ENCODE measurements at regions of chr18 and their contacts with region 1.

Region 1: DNA sequence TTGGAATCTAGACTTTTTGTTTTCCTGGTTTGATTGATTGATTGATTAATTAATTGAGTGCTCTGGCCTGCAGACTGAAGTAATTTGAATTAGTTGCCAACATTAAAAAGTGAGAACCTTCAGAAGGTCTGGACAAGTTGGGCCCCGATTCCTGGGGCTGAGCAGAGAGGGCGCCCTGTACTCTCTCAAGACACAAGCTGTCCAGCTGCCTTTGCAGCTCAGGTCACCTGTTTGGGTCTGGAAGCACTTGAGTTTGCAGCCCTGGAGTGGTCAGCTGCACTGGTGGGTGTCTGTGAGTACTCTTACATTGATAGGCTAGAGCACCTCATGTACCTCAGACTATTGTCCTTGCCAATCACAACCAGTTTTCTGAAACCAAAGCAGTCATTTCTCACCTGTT is 22.7 kb upstream of the CELF4 start:
- DNase-seq: no peak
- H3K4me3 ChIP-seq: no peak overlapping the region
- H3K4me3 Mint-ChIP-seq: no peak overlapping the region
- H3K27ac ChIP-seq: no peak overlapping the region
- H3K27ac Mint-ChIP-seq: no peak overlapping the region
- H3K4me1 ChIP-seq: no peaks in the 10 kb centered on the region
- H3K4me1 Mint-ChIP-seq: no peaks in the 10 kb centered on the region
- H3K27me3 ChIP-seq: no peaks in the 10 kb centered on the region
- H3K27me3 Mint-ChIP-seq: peaks cover 2 to 4% (median 4%) of the 10 kb centered on the region in 3 donors
- CTCF ChIP-seq: no peak

Region 2: GRCh38 chr18:37346048-37346447 is 242.2 kb before region 1 on chr18:
- intact Hi-C with region 1: no loop called
- DNase-seq: no peak
- H3K4me3 ChIP-seq: no peak overlapping the region
- H3K4me3 Mint-ChIP-seq: no peak overlapping the region
- H3K27ac ChIP-seq: no peak overlapping the region
- H3K27ac Mint-ChIP-seq: no peak overlapping the region
- H3K4me1 ChIP-seq: no peaks in the 10 kb centered on the region
- H3K4me1 Mint-ChIP-seq: no peaks in the 10 kb centered on the region
- H3K27me3 ChIP-seq: no peaks in the 10 kb centered on the region
- H3K27me3 Mint-ChIP-seq: peaks cover 3 to 15% (median 11%) of the 10 kb centered on the region in 3 donors
- CTCF ChIP-seq: no peak

Region 3: GRCh38 chr18:37502036-37502435 is 86.3 kb before region 1 on chr18:
- intact Hi-C with region 1: no loop called
- DNase-seq: no peak
- H3K4me3 ChIP-seq: no peak overlapping the region
- H3K4me3 Mint-ChIP-seq: no peak overlapping the region
- H3K27ac ChIP-seq: no peak overlapping the region
- H3K27ac Mint-ChIP-seq: no peak overlapping the region
- H3K4me1 ChIP-seq: no peaks in the 10 kb centered on the region
- H3K4me1 Mint-ChIP-seq: no peaks in the 10 kb centered on the region
- H3K27me3 ChIP-seq: no peaks in the 10 kb centered on the region
- H3K27me3 Mint-ChIP-seq: peaks cover 0 to 7% (median 2%) of the 10 kb centered on the region in 3 donors
- CTCF ChIP-seq: no peak

Region 4: GRCh38 chr18:37639846-37640245 is 51.6 kb after region 1 on chr18:
- intact Hi-C with region 1: loop called in 1 of 2 experiments (anchors 10 kb)
- DNase-seq: no peak
- H3K4me3 ChIP-seq: no peak overlapping the region
- H3K4me3 Mint-ChIP-seq: no peak overlapping the region
- H3K27ac ChIP-seq: no peak overlapping the region
- H3K27ac Mint-ChIP-seq: no peak overlapping the region
- H3K4me1 ChIP-seq: no peaks in the 10 kb centered on the region
- H3K4me1 Mint-ChIP-seq: no peaks in the 10 kb centered on the region
- H3K27me3 ChIP-seq: no peaks in the 10 kb centered on the region
- H3K27me3 Mint-ChIP-seq: peaks cover 0 to 1% (median 0%) of the 10 kb centered on the region in 3 donors
- CTCF ChIP-seq: no peak